ENCODE measurements at regions of chr7 and their contacts with region 1.

Region 1: DNA sequence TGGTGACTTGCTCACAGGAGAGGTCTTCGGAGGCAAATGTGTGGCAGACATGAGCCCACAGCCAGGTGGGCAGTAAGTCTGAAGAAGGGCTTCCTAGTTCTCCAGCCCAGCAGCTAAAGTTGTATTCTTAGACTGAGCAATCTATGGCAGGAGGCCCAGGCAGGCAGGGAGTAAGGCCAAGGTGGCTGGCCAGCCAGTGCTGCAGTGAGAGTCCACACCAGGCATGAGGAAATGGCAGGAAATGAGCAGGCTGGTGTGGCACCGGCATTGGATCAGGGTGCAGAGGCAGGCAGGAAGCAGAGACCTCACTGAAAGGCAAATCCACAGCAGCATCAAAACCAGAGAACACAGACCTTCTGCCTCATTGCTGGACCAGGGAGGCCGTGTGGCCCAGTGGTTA is 84.6 kb upstream of the PDE1C start:
- DNase-seq: peak; percentile 74 to 84 (median 78)
- ATAC-seq: peak; percentile 68 to 83 (median 80)
- H3K4me3 ChIP-seq: no peak overlapping the region
- H3K27ac ChIP-seq: peak overlapping the region in 11 of 12 donors; percentile 0 to 90 (median 72)
- H3K4me1 ChIP-seq: peaks cover 0 to 82% (median 28%) of the 10 kb centered on the region in 12 donors
- H3K27me3 ChIP-seq: no peaks in the 10 kb centered on the region
- CTCF ChIP-seq: no peak
- POLR2A ChIP-seq: no peak

Region 2: DNA sequence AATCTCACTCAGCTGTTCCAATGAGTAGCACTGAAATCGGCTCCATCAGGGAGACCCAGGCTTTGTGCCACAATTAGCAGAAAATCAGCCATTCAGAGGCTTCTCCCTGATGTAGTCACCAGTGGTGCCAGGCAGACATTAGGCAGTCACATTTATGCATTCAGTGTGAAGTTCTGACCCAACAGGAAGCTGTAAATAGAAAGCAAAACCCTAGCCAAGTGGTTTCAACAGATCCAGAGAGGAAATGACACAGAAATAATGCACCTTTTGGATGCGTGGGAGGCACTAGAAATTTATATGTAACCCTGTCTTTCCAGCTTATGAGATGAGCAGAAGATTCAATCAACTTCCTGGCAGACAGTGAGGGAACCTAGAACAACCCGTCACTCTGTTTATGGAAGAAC is 271.0 kb before region 1 on chr7:
- intact Hi-C with region 1: loop called in 2 of 10 experiments (anchors 10 kb)
- DNase-seq: peak in 2 of 5 donors; percentile 37
- ATAC-seq: peak; percentile 19 to 69 (median 59)
- H3K4me3 ChIP-seq: no peak overlapping the region
- H3K27ac ChIP-seq: peak overlapping the region; percentile 67 to 87 (median 82)
- H3K4me1 ChIP-seq: peaks cover 12 to 59% (median 27%) of the 10 kb centered on the region in 12 donors
- H3K27me3 ChIP-seq: no peaks in the 10 kb centered on the region
- CTCF ChIP-seq: no peak
- POLR2A ChIP-seq: no peak

Region 3: DNA sequence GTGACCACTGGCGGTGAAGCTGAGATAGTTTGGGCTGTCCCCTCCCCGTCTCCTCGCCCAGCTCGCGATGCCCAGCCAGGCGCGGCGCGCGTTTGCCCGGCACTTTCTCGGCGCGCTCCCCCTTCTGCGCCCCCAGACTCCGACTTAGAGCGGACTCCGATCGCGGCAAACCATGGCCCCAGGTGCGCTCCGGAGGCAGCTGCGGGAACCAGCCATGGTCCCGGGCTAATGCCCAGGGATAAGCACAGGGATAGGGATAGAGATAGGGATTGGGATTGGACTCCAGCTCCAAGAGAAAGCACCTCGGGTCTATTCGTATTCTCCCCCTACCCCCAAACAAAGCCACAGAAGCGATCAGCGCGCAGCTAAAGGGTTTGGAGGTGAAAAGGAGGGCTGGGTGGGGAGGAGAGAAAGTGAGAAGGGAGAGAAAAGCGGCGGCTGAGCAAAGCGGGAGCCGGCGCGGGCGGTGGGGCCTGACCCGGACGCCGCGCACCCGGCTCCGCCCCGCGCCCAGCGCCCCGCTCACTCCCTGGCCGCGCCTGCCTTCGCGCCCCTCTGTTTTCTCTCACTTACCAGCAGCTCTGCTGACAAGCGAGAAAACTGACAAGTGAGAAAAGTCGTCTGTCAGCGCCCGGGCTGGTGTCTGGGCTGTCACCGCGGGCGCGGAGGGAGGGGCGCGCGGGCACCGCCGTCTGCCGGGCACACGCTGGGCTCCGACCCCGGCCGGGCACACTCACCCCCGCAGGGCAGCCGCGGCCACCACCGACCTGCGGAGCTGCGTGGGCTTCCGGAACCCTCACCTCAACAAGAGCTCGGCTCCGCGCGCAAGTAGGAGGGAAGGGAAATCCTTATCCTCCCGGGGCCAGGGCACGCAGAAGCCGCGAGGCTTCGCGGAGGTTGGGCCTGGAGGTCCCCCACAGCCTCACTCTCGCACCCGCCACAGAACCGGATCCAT is 84.1 kb before region 1 on chr7 and contains the start of gene PDE1C:
- intact Hi-C with region 1: loop called in 6 of 10 experiments (anchors 2 to 10 kb)
- DNase-seq: peak; percentile 78 to 90 (median 81)
- ATAC-seq: peak; percentile 62 to 91 (median 82)
- H3K4me3 ChIP-seq: peak within 1 kb of the TSS; percentile 42 to 80 (median 64)
- H3K27ac ChIP-seq: peak within 1 kb of the TSS; percentile 78 to 97 (median 92)
- H3K4me1 ChIP-seq: peaks cover 0 to 42% (median 8%) of the 10 kb centered on the region in 12 donors
- H3K27me3 ChIP-seq: peaks cover 0 to 23% (median 0%) of the 10 kb centered on the region in 9 donors
- CTCF ChIP-seq: no peak
- POLR2A ChIP-seq: peak in 1 of 2 donors; percentile 43
- total RNA-seq, gene PDE1C: 63.7 to 307 (median 143) TPM

Region 4: DNA sequence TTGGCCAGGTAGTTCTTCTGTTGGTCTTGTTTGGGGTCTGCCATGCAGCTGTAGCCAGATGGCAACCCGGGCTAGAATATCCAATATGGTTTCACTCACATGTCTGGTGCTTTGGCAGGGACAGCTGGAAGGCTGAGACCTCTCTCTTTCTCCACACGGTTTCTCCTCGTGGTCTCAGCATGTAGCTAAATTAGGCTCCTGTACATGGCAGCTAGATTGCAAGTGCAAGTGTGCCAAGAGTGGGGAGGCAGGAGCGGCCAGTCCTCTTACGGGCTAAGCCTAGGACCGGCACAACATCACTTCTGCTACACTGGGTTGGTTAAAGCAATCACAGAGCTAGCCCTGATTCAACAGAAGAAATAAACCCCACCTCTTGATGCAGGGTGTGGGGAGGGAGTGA is 75.3 kb before region 1 on chr7:
- intact Hi-C with region 1: loop called in 5 of 10 experiments (anchors 2 to 10 kb)
- DNase-seq: peak in 4 of 5 donors; percentile 66 to 85 (median 79)
- ATAC-seq: peak; percentile 91 to 98 (median 96)
- H3K4me3 ChIP-seq: no peak overlapping the region
- H3K27ac ChIP-seq: peak overlapping the region in 10 of 12 donors; percentile 36 to 91 (median 74)
- H3K4me1 ChIP-seq: peaks cover 0 to 43% (median 17%) of the 10 kb centered on the region in 12 donors
- H3K27me3 ChIP-seq: no peaks in the 10 kb centered on the region
- CTCF ChIP-seq: no peak
- POLR2A ChIP-seq: no peak

Region 5: GRCh38 chr7:32093415-32094408 is 61.1 kb before region 1 on chr7:
- intact Hi-C with region 1: loop called in 2 of 10 experiments (anchors 5 kb)
- DNase-seq: peak in 4 of 5 donors; percentile 28 to 79 (median 63)
- ATAC-seq: peak; percentile 82 to 94 (median 86)
- H3K4me3 ChIP-seq: no peak overlapping the region
- H3K27ac ChIP-seq: peak overlapping the region in 10 of 12 donors; percentile 46 to 71 (median 64)
- H3K4me1 ChIP-seq: peaks cover 4 to 52% (median 23%) of the 10 kb centered on the region in 12 donors
- H3K27me3 ChIP-seq: no peaks in the 10 kb centered on the region
- CTCF ChIP-seq: no peak
- POLR2A ChIP-seq: no peak

Region 6: DNA sequence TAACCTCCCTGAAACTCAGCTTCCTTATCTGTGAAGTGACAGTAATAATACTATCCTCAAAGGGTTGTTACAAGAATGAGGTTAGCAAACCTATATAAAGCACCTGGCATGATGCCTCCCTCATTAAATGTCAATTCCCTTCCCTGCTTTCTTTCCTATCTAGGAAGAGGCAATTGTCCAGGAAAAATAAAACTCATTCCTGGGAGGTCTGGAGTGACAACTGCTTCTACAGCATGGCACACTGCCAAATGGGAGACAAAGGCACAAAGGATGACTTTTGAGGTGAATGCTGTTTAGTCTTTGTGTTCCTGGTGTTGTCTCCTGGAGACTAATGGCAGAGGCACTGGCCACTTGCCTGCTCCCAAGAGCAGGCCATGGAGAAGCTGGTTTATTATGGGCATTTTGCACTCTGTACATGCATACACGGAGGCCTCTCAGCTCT is 52.3 kb before region 1 on chr7:
- intact Hi-C with region 1: loop called in 4 of 10 experiments (anchors 2 to 10 kb)
- DNase-seq: peak in 4 of 5 donors; percentile 56 to 84 (median 70)
- ATAC-seq: peak; percentile 90 to 95 (median 92)
- H3K4me3 ChIP-seq: no peak overlapping the region
- H3K27ac ChIP-seq: peak overlapping the region; percentile 17 to 86 (median 64)
- H3K4me1 ChIP-seq: peaks cover 0 to 25% (median 5%) of the 10 kb centered on the region in 12 donors
- H3K27me3 ChIP-seq: no peaks in the 10 kb centered on the region
- CTCF ChIP-seq: no peak
- POLR2A ChIP-seq: no peak

Measured in heart left ventricle (tissue), 16 donors.